Sciatic nerve (tissue), 2 donors: ENCODE measurements at regions of chr19 and their contacts with region 1.

Region 1: GRCh38 chr19:44954824-44955586 is at the start of gene CLPTM1:
- DNase-seq: peak; percentile 98
- ATAC-seq: peak; percentile 97
- total RNA-seq, gene CLPTM1: 105 TPM

Region 2: GRCh38 chr19:44903602-44904425 is 51.2 kb before region 1 on chr19:
- intact Hi-C with region 1: loop called (anchors 5 kb)
- DNase-seq: peak; percentile 88
- ATAC-seq: peak; percentile 80

Region 3: GRCh38 chr19:45008552-45008951 is 53.5 kb after region 1 on chr19:
- intact Hi-C with region 1: no loop called
- DNase-seq: no peak
- ATAC-seq: no peak